ENCODE measurements at regions of chr20 and their contacts with region 1.

Region 1: DNA sequence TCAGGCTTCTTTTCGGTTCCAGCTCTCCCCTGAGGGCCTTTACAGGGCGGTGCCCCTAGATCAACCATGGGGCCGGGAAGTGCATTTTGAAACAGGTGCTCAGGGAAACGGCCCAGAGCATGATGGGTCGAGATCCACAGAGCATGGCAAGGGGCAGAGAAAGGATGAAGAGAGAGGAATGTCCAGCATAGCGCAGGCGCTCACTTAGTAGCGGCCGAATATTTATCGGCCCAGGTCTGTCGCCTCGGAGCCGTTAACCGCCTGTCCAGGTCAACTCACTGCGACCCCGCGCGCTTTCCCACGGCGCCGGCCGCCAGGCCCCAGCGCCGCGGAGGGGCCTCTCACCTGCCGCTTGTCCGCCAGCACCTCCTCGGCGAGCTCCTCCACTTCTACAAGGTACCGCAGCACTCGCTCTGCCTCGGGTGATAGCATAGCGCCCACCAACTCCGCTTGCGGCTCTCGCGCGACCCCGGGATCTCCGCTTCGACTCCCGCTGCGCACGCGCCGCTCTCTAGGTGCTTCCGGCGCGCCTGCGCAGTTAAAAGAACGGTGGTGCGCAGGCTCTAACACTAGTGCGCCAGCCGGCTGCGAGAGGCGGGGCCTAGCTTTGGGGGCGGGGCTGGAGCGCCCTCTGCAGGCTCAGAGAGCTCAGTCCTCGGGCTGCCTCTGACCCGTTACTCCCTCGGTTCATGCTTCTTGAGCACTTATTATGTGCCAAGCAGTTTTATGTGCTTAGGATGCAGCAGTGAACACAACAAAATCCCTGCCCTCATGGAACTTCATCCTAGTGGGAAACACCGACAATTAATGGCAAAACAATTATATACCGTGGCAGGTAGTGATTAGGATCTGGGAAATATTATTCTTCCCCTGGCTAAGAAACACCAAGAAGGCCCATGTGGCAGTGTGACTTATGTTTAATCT is at the start of gene PDRG1:
- DNase-seq: peak; percentile 98
- H3K4me3 Mint-ChIP-seq: peak within 1 kb of the TSS; percentile 99
- H3K27ac Mint-ChIP-seq: peak within 1 kb of the TSS; percentile 93
- H3K4me1 Mint-ChIP-seq: peaks cover 29% of the 10 kb centered on the region
- H3K27me3 Mint-ChIP-seq: peaks cover 2% of the 10 kb centered on the region
- total RNA-seq, gene PDRG1: 17.4 to 19.3 TPM

Region 2: DNA sequence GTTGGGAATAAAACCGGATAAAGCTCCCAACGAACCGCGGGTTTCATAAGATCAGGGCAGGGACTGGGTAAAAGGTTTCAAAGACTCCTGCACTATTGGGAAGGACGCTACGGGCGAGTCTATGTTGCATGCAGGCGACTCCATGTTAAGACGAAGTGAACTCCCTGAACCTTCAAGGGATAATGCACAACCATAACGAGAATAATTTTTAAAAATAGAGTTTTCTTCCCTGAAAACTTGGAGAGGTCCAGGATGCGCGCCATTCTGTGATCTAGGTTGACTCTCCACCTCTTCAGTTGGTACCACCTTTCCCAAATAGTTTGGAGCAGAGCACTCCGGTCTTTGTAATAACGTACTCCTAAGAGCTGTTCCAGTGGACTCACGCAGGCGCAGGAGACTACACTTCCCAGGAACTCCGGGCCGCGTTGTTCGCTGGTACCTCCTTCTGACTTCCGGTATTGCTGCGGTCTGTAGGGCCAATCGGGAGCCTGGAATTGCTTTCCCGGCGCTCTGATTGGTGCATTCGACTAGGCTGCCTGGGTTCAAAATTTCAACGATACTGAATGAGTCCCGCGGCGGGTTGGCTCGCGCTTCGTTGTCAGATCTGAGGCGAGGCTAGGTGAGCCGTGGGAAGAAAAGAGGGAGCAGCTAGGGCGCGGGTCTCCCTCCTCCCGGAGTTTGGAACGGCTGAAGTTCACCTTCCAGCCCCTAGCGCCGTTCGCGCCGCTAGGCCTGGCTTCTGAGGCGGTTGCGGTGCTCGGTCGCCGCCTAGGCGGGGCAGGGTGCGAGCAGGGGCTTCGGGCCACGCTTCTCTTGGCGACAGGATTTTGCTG is 212.8 kb before region 1 on chr20 and contains the start of gene TPX2:
- CTCF ChIA-PET with region 1: no interaction called
- intact Hi-C with region 1: loop called (anchors 5 kb)
- DNase-seq: peak; percentile 95
- H3K4me3 Mint-ChIP-seq: no peak within 1 kb of the TSS
- H3K27ac Mint-ChIP-seq: no peak within 1 kb of the TSS
- H3K4me1 Mint-ChIP-seq: peaks cover 4% of the 10 kb centered on the region
- H3K27me3 Mint-ChIP-seq: no peaks in the 10 kb centered on the region
- total RNA-seq, gene TPX2: 166 to 175 TPM

Region 3: GRCh38 chr20:31822421-31823330 is 129.1 kb before region 1 on chr20:
- CTCF ChIA-PET with region 1: interaction called, 12 read pairs
- intact Hi-C with region 1: loop called (anchors 1 kb)
- DNase-seq: peak; percentile 79
- H3K4me3 Mint-ChIP-seq: no peak overlapping the region
- H3K27ac Mint-ChIP-seq: no peak overlapping the region
- H3K4me1 Mint-ChIP-seq: peaks cover 4% of the 10 kb centered on the region
- H3K27me3 Mint-ChIP-seq: peaks cover 3% of the 10 kb centered on the region

Region 4: DNA sequence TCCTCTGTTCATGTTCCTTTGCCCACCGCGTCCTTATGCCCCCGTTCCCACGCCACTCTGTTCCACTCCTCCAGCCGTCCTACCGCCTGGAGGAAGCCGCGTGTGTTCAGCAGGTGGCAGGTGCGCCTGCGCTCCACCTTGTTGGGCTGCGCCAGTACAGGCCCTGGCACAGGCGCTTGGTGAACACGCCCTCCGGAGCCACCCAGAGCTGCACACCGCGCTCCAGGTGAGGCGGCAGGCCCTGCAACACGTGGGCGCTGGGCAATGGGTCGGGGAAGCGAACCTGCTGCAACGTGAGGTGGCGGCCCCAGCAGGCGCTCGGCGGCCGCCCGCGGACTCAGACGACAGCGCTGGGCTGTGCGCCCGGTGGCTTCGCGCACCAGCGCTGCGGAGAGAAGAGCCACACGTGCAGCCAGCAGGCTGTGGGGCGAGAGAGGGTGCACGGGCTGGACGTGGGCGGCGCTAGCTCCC is 102.3 kb before region 1 on chr20:
- CTCF ChIA-PET with region 1: interaction called, 107 read pairs
- intact Hi-C with region 1: loop called (anchors 1 kb)
- DNase-seq: no peak
- H3K4me3 Mint-ChIP-seq: no peak overlapping the region
- H3K27ac Mint-ChIP-seq: no peak overlapping the region
- H3K4me1 Mint-ChIP-seq: no peaks in the 10 kb centered on the region
- H3K27me3 Mint-ChIP-seq: peaks cover 21% of the 10 kb centered on the region

Region 5: DNA sequence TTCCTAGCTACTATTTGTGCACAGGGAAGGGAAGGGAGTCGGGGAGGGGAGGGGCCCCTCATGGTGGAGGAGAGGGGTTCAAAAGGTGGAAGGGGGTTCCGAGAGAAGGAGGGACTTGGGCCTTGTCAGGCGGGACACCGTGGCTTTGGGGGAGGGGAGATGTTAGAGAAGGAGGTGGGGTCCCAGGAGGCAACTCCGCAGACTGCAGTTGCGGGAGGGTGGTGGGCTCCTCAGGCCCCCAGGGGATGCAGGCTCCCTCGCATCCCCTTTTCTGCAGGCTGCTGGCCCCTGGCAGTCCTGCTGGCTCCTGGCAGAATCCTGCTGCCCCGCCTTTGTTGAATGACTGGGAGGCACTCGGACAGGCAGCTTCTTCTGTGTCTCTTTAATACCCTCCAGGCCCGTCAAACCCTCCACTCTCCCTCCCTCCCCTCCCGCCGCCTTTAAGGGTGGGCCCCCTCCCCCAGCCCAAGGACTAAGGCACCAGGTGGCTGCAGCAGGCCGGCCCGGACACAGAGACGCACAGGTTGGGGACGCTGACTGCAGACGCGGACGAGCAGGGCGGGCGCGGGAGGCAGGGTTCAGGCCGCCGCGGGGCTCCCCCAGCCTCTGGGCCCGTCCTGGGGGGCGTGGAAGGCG is 91.0 kb before region 1 on chr20:
- CTCF ChIA-PET with region 1: interaction called, 107 read pairs
- intact Hi-C with region 1: no loop called
- DNase-seq: no peak
- H3K4me3 Mint-ChIP-seq: peak overlapping the region; percentile 7
- H3K27ac Mint-ChIP-seq: no peak overlapping the region
- H3K4me1 Mint-ChIP-seq: peaks cover 7% of the 10 kb centered on the region
- H3K27me3 Mint-ChIP-seq: peaks cover 36% of the 10 kb centered on the region

Region 6: DNA sequence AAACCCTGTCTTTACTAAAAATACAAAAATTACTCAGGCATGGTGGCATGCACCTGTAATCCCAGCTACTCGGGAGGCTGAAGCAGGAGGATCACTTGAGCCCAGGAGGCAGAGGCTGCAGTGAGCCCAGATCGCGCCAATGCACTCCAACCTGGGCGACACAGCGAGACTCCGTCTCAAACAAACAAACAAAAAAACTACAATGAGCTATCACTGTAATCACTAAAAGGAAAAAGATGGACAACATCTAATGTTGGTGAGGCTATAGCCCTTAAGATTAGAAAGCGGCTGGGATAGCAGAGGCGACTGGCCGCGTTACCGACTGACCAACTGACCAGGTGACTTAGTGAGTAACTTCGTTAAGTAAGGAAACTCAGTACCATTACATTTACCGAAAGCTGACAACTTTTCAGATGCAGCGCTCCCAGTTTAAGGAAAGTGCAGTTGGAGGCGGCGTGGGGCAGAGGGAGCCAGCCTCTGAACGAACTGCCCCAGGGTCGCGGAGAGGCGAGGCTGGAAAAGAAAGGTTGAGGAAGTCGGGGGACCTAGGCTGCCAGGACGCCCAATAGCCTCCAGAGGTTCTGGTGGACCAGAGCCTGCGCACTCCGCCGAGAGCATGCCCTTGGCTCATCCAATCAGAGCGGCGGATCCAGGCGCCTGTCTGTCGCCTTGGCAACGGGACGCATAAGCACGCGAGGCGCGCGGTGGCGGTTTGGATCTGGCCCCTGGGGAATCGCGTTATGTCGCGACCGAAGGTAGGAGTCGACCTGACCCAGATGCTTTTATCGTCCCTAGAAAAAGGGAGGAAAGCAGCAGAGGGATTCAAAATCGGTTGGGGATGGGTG is 72.4 kb before region 1 on chr20:
- CTCF ChIA-PET with region 1: interaction called, 3 read pairs
- intact Hi-C with region 1: loop called (anchors 1 kb)
- DNase-seq: peak; percentile 78
- H3K4me3 Mint-ChIP-seq: peak overlapping the region; percentile 88
- H3K27ac Mint-ChIP-seq: peak overlapping the region; percentile 50
- H3K4me1 Mint-ChIP-seq: peaks cover 13% of the 10 kb centered on the region
- H3K27me3 Mint-ChIP-seq: peaks cover 2% of the 10 kb centered on the region

Region 7: DNA sequence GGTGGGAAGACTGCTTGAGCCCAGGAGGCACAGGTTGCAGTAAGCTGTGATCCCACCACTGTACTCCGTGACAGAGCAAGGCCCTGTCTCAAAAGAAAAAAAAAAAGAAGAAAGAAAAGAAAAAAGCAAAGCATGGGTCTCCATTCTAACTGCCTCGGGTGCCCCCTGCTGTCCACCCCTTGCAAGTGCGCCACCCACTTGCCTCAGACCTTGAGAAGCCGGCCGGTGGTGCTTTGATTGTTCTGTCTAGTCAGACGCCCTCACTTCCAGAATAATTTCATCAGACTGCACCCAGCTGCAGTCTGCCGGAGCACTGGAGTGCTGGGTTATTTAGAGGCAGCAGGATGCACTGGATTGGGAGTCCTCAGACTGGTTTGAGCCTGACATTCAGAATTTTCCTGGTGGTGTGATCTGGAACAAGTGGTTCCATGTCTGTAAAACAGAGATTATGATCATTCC is 140.1 kb after region 1 on chr20:
- CTCF ChIA-PET with region 1: interaction called, 4 read pairs
- intact Hi-C with region 1: loop called (anchors 2 kb)
- DNase-seq: peak; percentile 92
- H3K4me3 Mint-ChIP-seq: no peak overlapping the region
- H3K27ac Mint-ChIP-seq: no peak overlapping the region
- H3K4me1 Mint-ChIP-seq: no peaks in the 10 kb centered on the region
- H3K27me3 Mint-ChIP-seq: no peaks in the 10 kb centered on the region

Region 8: GRCh38 chr20:32497589-32498224 is 545.9 kb after region 1 on chr20:
- CTCF ChIA-PET with region 1: no interaction called
- intact Hi-C with region 1: no loop called
- DNase-seq: no peak
- H3K4me3 Mint-ChIP-seq: no peak overlapping the region
- H3K27ac Mint-ChIP-seq: no peak overlapping the region
- H3K4me1 Mint-ChIP-seq: peaks cover 32% of the 10 kb centered on the region
- H3K27me3 Mint-ChIP-seq: no peaks in the 10 kb centered on the region